HEK293 (cell line): ENCODE measurements at regions of chr6 and their contacts with region 1.

Region 1: DNA sequence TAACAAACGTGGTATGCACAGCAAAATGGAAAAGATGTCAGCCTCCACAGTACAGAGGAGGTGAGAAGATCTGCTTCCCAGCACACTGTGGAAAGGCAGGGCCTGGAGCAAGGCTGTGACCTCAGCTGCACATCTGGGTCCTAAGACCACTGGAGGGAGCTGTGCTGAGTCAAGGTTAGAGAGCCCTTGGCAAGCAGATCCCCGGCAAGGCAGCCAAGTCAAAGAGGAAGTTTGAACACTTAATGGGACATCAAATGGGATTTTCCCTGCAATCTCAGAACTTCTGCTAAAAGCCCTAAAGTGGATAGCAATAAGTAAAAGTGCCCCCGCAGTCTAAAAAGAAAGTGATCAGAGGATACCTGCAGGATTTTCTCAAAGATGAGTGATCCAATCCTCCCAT is 39.5 kb downstream of the UNC5CL start:
- H3K4me3 ChIP-seq: no peak overlapping the region
- H3K27ac ChIP-seq: no peak overlapping the region
- H3K4me1 ChIP-seq: peaks cover 20% of the 10 kb centered on the region
- CTCF ChIP-seq: peak; percentile 63; the same call in 1 of the 2 replicates

Region 2: DNA sequence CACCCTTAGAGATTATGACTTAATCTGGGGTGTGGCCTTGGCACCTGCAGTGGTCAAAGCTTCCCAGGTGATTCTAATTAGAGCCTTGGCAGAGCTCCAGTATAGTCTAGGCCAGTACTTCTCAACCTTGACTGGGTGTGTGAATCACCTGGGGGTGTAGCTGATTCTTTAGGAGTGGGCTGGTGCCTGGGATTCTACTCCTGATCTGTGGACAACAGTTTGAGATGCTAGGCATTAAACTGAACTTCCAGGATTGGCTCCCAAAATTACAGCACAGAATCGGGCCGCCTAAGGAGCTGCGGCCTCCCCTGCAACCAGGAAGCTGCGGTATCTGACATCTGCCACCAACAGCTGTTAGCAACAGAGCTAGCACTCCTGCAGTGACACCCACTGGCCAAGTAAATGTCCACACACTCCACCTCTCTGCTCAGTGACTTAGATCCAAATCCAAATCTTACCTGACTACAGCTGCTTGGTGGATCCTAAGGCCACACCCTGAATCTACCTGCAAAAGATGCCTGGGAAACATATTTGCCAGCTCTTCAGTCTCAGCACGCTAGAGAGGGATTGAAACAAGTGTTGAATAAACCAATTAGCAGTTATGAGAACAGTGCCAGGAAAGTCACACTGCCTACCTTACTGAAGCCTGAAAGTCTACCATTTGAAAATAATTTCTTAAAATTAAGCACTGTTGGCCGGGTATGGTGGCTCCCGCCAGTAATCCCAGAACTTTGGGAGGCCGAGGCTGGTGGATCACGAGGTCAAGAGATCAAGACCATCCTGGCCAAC is 87.2 kb before region 1 on chr6:
- CTCF ChIA-PET with region 1: no interaction called
- POLR2A ChIA-PET with region 1: no interaction called
- H3K4me3 ChIP-seq: no peak overlapping the region
- H3K27ac ChIP-seq: no peak overlapping the region
- H3K4me1 ChIP-seq: peaks cover 4% of the 10 kb centered on the region; the same call in 1 of the 2 replicates
- CTCF ChIP-seq: peak; percentile 38; the same call in 1 of the 2 replicates

Region 3: GRCh38 chr6:41013466-41014153 is 14.0 kb after region 1 on chr6:
- CTCF ChIA-PET with region 1: interaction called, 13 read pairs
- POLR2A ChIA-PET with region 1: no interaction called
- H3K4me3 ChIP-seq: no peak overlapping the region
- H3K27ac ChIP-seq: no peak overlapping the region
- H3K4me1 ChIP-seq: peaks cover 4% of the 10 kb centered on the region; the same call in 1 of the 2 replicates
- CTCF ChIP-seq: no peak

Region 4: DNA sequence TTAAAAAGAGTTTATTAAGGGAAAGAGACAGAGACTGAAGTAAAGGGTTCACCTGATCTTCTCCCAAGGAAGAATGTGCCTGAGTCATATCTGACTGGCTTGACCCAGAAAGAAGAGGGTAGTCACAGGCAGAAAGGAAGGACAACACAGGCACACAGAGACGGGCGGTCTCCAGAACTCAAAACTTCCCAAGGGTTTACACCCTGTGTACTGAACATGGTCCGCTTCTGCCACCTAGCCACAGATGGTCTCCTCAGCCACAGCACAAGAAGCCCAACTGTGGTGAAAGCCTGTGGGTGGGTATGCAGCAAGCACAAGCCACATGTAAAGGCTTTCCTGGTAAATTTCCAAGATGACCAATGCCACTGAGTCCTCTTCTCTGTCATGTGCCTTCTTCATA is 22.3 kb after region 1 on chr6:
- CTCF ChIA-PET with region 1: interaction called, 40 read pairs
- POLR2A ChIA-PET with region 1: no interaction called
- H3K4me3 ChIP-seq: no peak overlapping the region
- H3K27ac ChIP-seq: peak overlapping the region; percentile 38; the same call in 1 of the 2 replicates
- H3K4me1 ChIP-seq: peaks cover 18% of the 10 kb centered on the region
- CTCF ChIP-seq: peak; percentile 71

Region 5: GRCh38 chr6:41367700-41368099 is 368.1 kb after region 1 on chr6:
- CTCF ChIA-PET with region 1: no interaction called
- POLR2A ChIA-PET with region 1: no interaction called
- H3K4me3 ChIP-seq: no peak overlapping the region
- H3K27ac ChIP-seq: no peak overlapping the region
- H3K4me1 ChIP-seq: no peaks in the 10 kb centered on the region
- CTCF ChIP-seq: peak; percentile 90